GM12878 (cell line): ENCODE measurements at regions of chr14 and their contacts with region 1.

Region 1: DNA sequence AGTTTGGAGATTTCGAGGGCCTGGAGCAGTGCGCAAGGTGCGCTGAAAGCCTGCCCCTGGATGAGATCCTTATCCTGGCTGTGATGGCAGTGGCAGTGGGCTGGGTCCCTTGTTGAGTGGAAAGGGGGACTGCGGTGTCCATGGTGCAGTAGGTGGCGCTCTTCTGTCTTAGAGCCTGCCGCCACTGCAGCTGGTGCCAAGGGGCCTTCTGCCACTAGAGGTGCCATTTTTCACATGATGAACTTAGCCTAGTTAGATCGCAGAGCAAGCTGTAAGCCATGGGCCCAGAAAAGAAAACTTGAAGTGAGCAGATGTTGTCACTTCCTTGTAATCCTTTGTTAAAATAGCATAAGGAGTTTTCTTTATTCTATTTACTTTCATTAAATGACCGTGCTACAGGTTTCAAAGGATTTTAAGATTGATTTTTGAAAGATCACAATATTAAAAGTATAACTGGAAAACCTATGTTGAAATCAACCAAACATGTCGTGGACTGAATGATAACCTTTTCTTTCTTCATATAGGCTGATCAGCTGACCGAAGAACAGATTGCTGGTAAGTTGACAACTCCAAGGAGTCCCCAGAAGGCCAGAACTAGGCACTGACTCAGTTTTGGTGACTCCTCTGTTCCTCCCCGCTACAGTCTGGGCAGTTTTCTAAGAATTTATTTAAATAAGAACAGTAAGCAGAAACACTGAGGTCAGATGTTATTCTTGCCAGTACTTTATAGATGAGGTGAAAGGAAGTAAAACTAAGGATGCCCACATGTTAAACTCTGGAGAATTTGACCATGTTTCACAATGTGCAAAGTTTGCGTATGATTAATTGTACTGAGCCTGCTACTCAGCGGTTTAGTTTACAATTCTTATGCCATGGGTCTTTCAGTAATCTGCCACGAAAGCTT is 3.0 kb downstream of the CALM1 start:
- DNase-seq: peak; percentile 68
- ATAC-seq: peak; percentile 76
- H3K4me3 ChIP-seq: peak overlapping the region; percentile 99
- H3K27ac ChIP-seq: peak overlapping the region; percentile 10
- H3K4me1 ChIP-seq: peaks cover 6% of the 10 kb centered on the region
- H3K27me3 ChIP-seq: no peaks in the 10 kb centered on the region; a peak in 1 of 4 replicates
- CTCF ChIP-seq: peak; percentile 99 to 100 (median 100); a peak in 5 of 6 replicates
- EP300 ChIP-seq: no peak
- POLR2A ChIP-seq: peak; percentile 59
- RAD21 ChIP-seq: peak; percentile 65

Region 2: GRCh38 chr14:90274808-90275457 is 124.9 kb before region 1 on chr14:
- CTCF ChIA-PET with region 1: no interaction called
- POLR2A ChIA-PET with region 1: no interaction called
- RAD21 ChIA-PET with region 1: no interaction called
- SMC1A ChIA-PET with region 1: no interaction called
- in situ Hi-C with region 1: no loop called
- intact Hi-C with region 1: no loop called
- DNase-seq: no peak
- ATAC-seq: peak; percentile 11; the same call in 1 of the 3 replicates
- H3K4me3 ChIP-seq: no peak overlapping the region
- H3K27ac ChIP-seq: no peak overlapping the region
- H3K4me1 ChIP-seq: no peaks in the 10 kb centered on the region
- H3K27me3 ChIP-seq: no peaks in the 10 kb centered on the region
- CTCF ChIP-seq: no peak
- EP300 ChIP-seq: no peak
- POLR2A ChIP-seq: no peak; the same call in 1 of the 2 replicates
- RAD21 ChIP-seq: no peak

Region 3: GRCh38 chr14:90331497-90332435 is 68.0 kb before region 1 on chr14 and contains the start of gene NRDE2:
- CTCF ChIA-PET with region 1: no interaction called
- POLR2A ChIA-PET with region 1: no interaction called
- RAD21 ChIA-PET with region 1: interaction called, 3 read pairs
- SMC1A ChIA-PET with region 1: interaction called, 3 read pairs
- in situ Hi-C with region 1: no loop called
- intact Hi-C with region 1: loop called (anchors 5 kb)
- DNase-seq: peak; percentile 78
- ATAC-seq: peak; percentile 97
- H3K4me3 ChIP-seq: peak within 1 kb of the TSS; percentile 76
- H3K27ac ChIP-seq: peak within 1 kb of the TSS; percentile 79
- H3K4me1 ChIP-seq: no peaks in the 10 kb centered on the region
- H3K27me3 ChIP-seq: no peaks in the 10 kb centered on the region
- CTCF ChIP-seq: no peak
- EP300 ChIP-seq: no peak
- POLR2A ChIP-seq: peak; percentile 87
- RAD21 ChIP-seq: no peak
- polyA plus RNA-seq, gene NRDE2: 8.3 to 8.4 TPM

Region 4: DNA sequence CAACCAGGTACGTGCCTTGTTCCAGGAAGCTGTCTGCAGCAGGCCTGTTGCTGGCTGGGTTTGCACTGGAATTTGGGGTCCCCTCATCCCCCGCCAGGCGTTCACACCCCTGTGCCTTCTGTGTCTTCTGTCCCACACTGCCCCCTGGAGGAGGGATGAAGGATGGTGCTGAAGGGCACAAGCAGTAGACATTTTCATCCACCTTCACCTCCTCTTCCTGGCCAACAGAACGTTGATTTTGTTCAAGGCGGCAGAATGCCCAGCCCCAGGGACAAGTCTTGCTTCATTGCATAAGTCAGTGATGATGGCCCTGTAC is 119.1 kb after region 1 on chr14:
- CTCF ChIA-PET with region 1: interaction called, 3 read pairs
- POLR2A ChIA-PET with region 1: no interaction called
- RAD21 ChIA-PET with region 1: no interaction called
- SMC1A ChIA-PET with region 1: no interaction called
- in situ Hi-C with region 1: no loop called
- intact Hi-C with region 1: loop called (anchors 1 kb)
- DNase-seq: no peak
- ATAC-seq: peak; percentile 82
- H3K4me3 ChIP-seq: no peak overlapping the region
- H3K27ac ChIP-seq: no peak overlapping the region
- H3K4me1 ChIP-seq: no peaks in the 10 kb centered on the region
- H3K27me3 ChIP-seq: no peaks in the 10 kb centered on the region; a peak in 1 of 4 replicates
- CTCF ChIP-seq: peak; percentile 43 to 71 (median 59); a peak in 5 of 6 replicates
- EP300 ChIP-seq: no peak
- POLR2A ChIP-seq: no peak
- RAD21 ChIP-seq: peak; percentile 52

Region 5: GRCh38 chr14:90697577-90698206 is 297.9 kb after region 1 on chr14:
- CTCF ChIA-PET with region 1: interaction called, 49 read pairs
- POLR2A ChIA-PET with region 1: no interaction called
- RAD21 ChIA-PET with region 1: interaction called, 9 read pairs
- SMC1A ChIA-PET with region 1: interaction called, 19 read pairs
- in situ Hi-C with region 1: loop called (anchors 5 kb)
- intact Hi-C with region 1: loop called (anchors 1 kb)
- DNase-seq: no peak
- ATAC-seq: peak; percentile 99
- H3K4me3 ChIP-seq: no peak overlapping the region
- H3K27ac ChIP-seq: no peak overlapping the region
- H3K4me1 ChIP-seq: no peaks in the 10 kb centered on the region
- H3K27me3 ChIP-seq: no peaks in the 10 kb centered on the region
- CTCF ChIP-seq: peak; percentile 89 to 95 (median 91)
- EP300 ChIP-seq: no peak
- POLR2A ChIP-seq: no peak
- RAD21 ChIP-seq: peak; percentile 88

Region 6: DNA sequence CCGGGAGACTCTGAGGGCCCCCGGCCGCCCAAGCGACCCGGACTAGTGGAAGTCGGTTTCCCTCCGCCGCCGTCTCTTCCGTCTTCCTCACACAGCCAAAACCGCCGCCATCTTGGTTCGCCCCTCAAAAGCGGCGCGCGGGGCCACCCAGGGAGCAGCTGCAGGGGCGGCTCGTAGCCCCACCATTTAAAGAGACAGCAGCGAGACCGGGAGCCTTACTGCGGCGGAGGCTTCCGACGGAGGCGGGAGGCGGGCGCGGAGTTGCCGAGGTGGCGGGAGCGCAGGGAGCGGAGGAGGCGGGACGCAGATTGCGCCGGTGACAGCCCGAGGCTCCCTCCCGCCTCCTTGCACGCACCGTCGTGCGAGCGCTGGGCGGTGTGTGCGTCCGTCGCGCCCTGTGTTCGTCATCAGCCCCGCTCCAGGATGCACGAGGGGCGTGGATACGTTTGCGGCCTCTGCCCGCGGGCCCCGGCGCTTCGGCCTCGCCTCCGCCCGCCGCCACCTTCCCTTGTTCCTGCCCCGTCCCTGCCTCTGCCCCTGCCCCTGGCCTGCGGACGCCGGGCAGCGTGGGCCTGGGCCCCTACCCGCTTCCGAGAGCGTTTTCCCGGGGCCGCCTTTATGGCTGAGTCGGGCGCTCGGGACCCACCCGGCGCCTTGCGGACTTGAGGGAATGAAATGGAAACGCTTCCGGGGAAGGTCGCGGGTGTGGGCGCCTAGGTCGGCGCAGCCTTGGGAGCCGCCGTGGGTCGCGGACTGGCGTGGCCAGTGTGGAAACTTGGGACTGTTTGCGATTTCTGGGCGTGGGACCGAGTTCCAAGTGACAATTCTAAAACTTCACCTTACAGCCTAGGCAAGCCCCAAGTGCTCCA is 1110.6 kb after region 1 on chr14 and contains the start of gene PPP4R3A:
- CTCF ChIA-PET with region 1: no interaction called
- POLR2A ChIA-PET with region 1: no interaction called
- RAD21 ChIA-PET with region 1: no interaction called
- SMC1A ChIA-PET with region 1: no interaction called
- in situ Hi-C with region 1: loop called (anchors 25 kb)
- intact Hi-C with region 1: no loop called
- DNase-seq: peak; percentile 88
- ATAC-seq: peak; percentile 87
- H3K4me3 ChIP-seq: peak within 1 kb of the TSS; percentile 99
- H3K27ac ChIP-seq: peak within 1 kb of the TSS; percentile 97
- H3K4me1 ChIP-seq: peaks cover 5% of the 10 kb centered on the region
- H3K27me3 ChIP-seq: no peaks in the 10 kb centered on the region
- CTCF ChIP-seq: no peak
- EP300 ChIP-seq: peak; percentile 54 to 61; a peak in 2 of 4 replicates
- POLR2A ChIP-seq: peak; percentile 95
- RAD21 ChIP-seq: no peak
- polyA plus RNA-seq, gene PPP4R3A: 19.4 to 28.2 TPM